CD8-positive, alpha-beta T cell (primary cell): ENCODE measurements at regions of chr4 and their contacts with region 1.

Region 1: GRCh38 chr4:184733654-184734524 is at the start of gene CENPU:
- DNase-seq: peak; percentile 87 to 97 (median 94)
- ATAC-seq: peak; percentile 95
- H3K4me3 ChIP-seq: peak within 1 kb of the TSS; percentile 74 to 79
- H3K4me3 Mint-ChIP-seq: peak within 1 kb of the TSS; percentile 87
- H3K27ac ChIP-seq: peak within 1 kb of the TSS; percentile 2 to 43
- H3K27ac Mint-ChIP-seq: peak within 1 kb of the TSS; percentile 84
- H3K4me1 ChIP-seq: peaks cover 8% of the 10 kb centered on the region
- H3K4me1 Mint-ChIP-seq: peaks cover 18% of the 10 kb centered on the region
- H3K27me3 ChIP-seq: no peaks in the 10 kb centered on the region
- H3K27me3 Mint-ChIP-seq: no peaks in the 10 kb centered on the region
- CTCF ChIP-seq: no peak
- total RNA-seq, gene CENPU: 3.4 TPM

Region 2: DNA sequence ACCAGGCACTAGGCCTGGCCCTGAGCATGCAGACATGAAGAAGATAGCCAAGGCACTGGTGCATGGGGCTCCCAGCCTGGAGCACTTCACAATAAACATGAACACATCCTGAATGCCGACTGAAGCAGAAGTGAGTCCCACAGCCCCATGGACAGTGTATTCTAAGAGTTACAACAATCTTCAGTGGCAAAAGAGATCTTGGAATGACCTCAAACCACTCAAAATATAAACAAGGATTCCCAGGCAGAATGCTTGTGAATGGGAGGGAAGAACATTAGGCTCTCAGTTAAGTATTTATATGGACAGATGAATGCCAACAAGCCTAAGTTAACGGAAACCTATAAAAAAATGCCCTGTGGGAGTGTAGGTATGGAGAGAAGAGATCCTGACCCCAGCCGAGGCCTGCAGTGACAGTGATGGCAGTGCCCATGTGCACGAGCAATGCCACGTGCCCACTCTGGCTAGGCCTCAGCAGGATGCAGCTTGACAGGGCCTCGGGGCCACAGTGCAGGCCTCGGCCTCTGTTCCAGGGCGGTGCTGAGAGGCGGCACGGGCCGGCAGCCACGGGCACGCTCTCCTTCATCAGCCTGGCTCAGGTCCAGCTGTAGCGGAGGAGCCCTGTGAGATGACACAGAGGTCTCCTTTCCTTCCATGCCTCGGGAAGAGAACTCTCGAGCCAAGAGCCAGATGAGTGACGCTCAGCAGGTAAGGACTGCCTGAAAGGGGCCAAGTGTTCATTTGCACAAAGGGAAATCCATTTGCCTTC is 308.7 kb before region 1 on chr4:
- CTCF ChIA-PET with region 1: no interaction called
- POLR2A ChIA-PET with region 1: no interaction called
- intact Hi-C with region 1: no loop called
- DNase-seq: no peak
- ATAC-seq: no peak
- H3K4me3 ChIP-seq: no peak overlapping the region
- H3K4me3 Mint-ChIP-seq: no peak overlapping the region
- H3K27ac ChIP-seq: no peak overlapping the region
- H3K27ac Mint-ChIP-seq: peak overlapping the region; percentile 53
- H3K4me1 ChIP-seq: peaks cover 10% of the 10 kb centered on the region
- H3K4me1 Mint-ChIP-seq: peaks cover 74% of the 10 kb centered on the region
- H3K27me3 ChIP-seq: no peaks in the 10 kb centered on the region
- H3K27me3 Mint-ChIP-seq: no peaks in the 10 kb centered on the region
- CTCF ChIP-seq: no peak

Region 3: DNA sequence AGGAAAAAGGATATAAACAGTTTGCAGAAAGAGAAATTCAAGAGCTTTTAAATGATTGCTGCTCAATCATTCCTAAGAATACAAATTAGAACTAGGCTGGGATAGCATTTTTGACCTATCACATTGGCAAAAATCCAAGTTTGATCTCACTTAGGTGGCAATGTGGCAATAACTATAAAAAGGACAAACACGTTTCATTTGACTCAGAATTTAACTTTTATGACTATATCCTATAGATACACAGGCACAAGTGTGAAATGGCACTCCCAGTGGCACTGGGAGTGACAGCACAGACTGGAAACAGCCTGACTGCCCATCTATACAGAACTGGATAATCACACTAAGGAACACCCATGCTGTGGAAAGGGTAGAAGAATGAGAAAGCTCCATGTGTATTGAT is 11.1 kb before region 1 on chr4:
- CTCF ChIA-PET with region 1: interaction called, 18 read pairs
- POLR2A ChIA-PET with region 1: interaction called, 23 read pairs
- intact Hi-C with region 1: no loop called
- DNase-seq: no peak
- ATAC-seq: no peak
- H3K4me3 ChIP-seq: no peak overlapping the region
- H3K4me3 Mint-ChIP-seq: no peak overlapping the region
- H3K27ac ChIP-seq: no peak overlapping the region
- H3K27ac Mint-ChIP-seq: peak overlapping the region; percentile 5
- H3K4me1 ChIP-seq: no peaks in the 10 kb centered on the region
- H3K4me1 Mint-ChIP-seq: no peaks in the 10 kb centered on the region
- H3K27me3 ChIP-seq: no peaks in the 10 kb centered on the region
- H3K27me3 Mint-ChIP-seq: no peaks in the 10 kb centered on the region
- CTCF ChIP-seq: no peak

Region 4: DNA sequence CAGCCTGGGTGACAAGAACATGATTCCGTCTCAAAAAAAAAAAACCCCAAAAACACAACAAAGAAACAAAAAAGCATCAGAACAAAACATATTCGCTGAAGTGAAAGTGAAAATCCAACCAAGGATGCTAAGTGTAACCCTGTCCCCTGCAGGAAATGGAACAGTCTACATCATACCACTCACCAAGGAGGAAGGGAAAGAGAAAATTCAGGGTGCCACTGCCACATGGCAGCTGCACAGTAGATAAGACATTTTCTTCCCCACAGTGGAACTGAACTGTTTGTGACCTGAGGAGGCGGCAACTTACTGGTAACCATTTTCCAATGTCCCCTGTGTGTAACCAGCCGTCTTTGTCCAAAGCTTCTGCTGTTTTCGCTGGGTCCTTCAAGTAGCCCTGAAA is 28.2 kb after region 1 on chr4:
- CTCF ChIA-PET with region 1: no interaction called
- POLR2A ChIA-PET with region 1: interaction called, 10 read pairs
- intact Hi-C with region 1: no loop called
- DNase-seq: peak in 7 of 9 experiments; percentile 16 to 85 (median 39)
- ATAC-seq: peak; percentile 98
- H3K4me3 ChIP-seq: peak overlapping the region in 1 of 2 experiments; percentile 13
- H3K4me3 Mint-ChIP-seq: peak overlapping the region; percentile 66
- H3K27ac ChIP-seq: peak overlapping the region; percentile 1 to 70
- H3K27ac Mint-ChIP-seq: peak overlapping the region; percentile 88
- H3K4me1 ChIP-seq: peaks cover 15% of the 10 kb centered on the region
- H3K4me1 Mint-ChIP-seq: peaks cover 17% of the 10 kb centered on the region
- H3K27me3 ChIP-seq: no peaks in the 10 kb centered on the region
- H3K27me3 Mint-ChIP-seq: no peaks in the 10 kb centered on the region
- CTCF ChIP-seq: peak; percentile 16

Region 5: DNA sequence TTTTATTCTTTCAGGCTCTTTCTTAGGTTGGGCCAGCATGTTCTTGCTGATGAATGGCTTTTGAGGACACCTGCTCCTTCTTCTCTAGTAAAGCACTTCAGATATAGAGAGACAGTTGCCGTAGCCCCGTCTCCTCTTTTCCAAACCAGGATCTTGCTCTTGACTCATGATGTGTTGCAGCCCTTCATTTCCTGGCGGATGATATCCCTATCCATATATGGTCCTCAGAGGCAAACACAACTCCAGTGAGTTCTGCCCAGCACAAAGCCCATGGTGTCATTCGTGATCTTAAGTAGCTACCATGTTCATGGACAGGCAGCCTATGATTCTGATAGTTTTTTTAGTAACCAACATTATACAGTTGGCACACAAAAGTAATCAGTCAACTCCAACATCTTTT is 151.7 kb after region 1 on chr4:
- CTCF ChIA-PET with region 1: no interaction called
- POLR2A ChIA-PET with region 1: no interaction called
- intact Hi-C with region 1: no loop called
- DNase-seq: no peak
- ATAC-seq: no peak
- H3K4me3 ChIP-seq: no peak overlapping the region
- H3K4me3 Mint-ChIP-seq: no peak overlapping the region
- H3K27ac ChIP-seq: no peak overlapping the region
- H3K27ac Mint-ChIP-seq: no peak overlapping the region
- H3K4me1 ChIP-seq: no peaks in the 10 kb centered on the region
- H3K4me1 Mint-ChIP-seq: no peaks in the 10 kb centered on the region
- H3K27me3 ChIP-seq: no peaks in the 10 kb centered on the region
- H3K27me3 Mint-ChIP-seq: peaks cover 5% of the 10 kb centered on the region
- CTCF ChIP-seq: no peak

Region 6: GRCh38 chr4:184932343-184932742 is 198.5 kb after region 1 on chr4:
- CTCF ChIA-PET with region 1: no interaction called
- POLR2A ChIA-PET with region 1: no interaction called
- intact Hi-C with region 1: no loop called
- DNase-seq: no peak
- ATAC-seq: no peak
- H3K4me3 ChIP-seq: no peak overlapping the region
- H3K4me3 Mint-ChIP-seq: no peak overlapping the region
- H3K27ac ChIP-seq: no peak overlapping the region
- H3K27ac Mint-ChIP-seq: no peak overlapping the region
- H3K4me1 ChIP-seq: no peaks in the 10 kb centered on the region
- H3K4me1 Mint-ChIP-seq: no peaks in the 10 kb centered on the region
- H3K27me3 ChIP-seq: no peaks in the 10 kb centered on the region
- H3K27me3 Mint-ChIP-seq: peaks cover 5% of the 10 kb centered on the region
- CTCF ChIP-seq: no peak